ENCODE measurements at regions of chr16 and their contacts with region 1.

Region 1: DNA sequence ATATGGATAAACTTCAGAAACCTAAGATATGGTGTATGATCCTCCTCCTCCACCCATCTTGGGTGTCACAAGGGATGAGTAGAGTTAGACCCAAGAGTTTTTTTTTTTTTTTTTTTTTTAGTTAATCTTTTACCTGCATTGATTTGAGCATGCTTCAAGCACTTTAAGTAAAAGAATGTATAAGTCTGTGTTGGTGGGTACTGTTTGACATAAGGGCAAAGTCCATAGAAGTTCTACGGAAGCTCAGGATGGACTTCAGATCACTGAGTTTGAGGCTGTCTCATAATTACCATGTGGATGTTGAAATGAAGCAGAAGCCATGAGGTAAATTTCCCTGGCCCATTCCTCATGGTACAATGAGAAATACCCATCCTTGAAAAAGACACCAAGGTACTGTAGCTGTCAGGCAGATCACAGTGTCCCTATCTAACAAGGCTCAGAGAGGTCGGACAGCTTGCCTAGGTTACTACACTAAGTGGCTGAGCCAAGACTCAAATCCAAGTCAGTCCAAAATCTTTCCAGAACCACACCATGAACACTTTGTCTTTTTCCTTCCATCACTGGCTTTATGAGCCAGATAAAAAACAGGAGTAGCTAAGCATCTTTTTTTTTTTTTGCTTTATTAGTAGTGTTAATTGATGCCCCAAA is 962.8 kb downstream of the CDH11 start:
- DNase-seq: no peak
- ATAC-seq: no peak
- H3K4me3 Mint-ChIP-seq: no peak overlapping the region
- H3K27ac Mint-ChIP-seq: no peak overlapping the region
- H3K4me1 Mint-ChIP-seq: no peaks in the 10 kb centered on the region
- H3K27me3 Mint-ChIP-seq: no peaks in the 10 kb centered on the region

Region 2: DNA sequence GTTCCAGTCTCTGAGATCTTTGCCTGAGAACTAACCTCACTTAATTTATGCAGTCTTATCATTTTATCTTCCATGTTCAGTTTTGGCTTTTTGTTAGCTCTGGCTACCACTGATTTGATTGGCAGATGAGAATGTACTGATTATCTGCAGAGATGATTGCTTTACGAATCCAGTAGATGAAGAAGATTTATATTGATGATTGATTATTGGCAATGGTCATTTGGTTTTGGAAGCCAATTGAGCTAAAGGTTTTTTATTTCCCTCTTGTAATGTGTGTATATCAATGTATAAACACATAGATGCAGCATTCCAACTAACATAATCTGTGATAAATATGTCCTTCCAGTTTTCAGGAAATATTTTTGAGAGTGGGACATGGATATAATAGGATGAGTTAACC is 199.2 kb after region 1 on chr16:
- CTCF ChIA-PET with region 1: no interaction called
- POLR2A ChIA-PET with region 1: interaction called, 11 read pairs
- intact Hi-C with region 1: no loop called
- DNase-seq: no peak
- ATAC-seq: no peak
- H3K4me3 Mint-ChIP-seq: no peak overlapping the region
- H3K27ac Mint-ChIP-seq: no peak overlapping the region
- H3K4me1 Mint-ChIP-seq: no peaks in the 10 kb centered on the region
- H3K27me3 Mint-ChIP-seq: no peaks in the 10 kb centered on the region